ENCODE measurements at regions of chr9 and their contacts with region 1.

Region 1: GRCh38 chr9:92790542-92791527 is 26.2 kb upstream of the BICD2 start:
- DNase-seq: peak; percentile 77
- ATAC-seq: peak; percentile 97
- H3K4me3 ChIP-seq: no peak overlapping the region
- H3K27ac ChIP-seq: no peak overlapping the region
- H3K4me1 ChIP-seq: no peaks in the 10 kb centered on the region
- H3K27me3 ChIP-seq: no peaks in the 10 kb centered on the region
- CTCF ChIP-seq: peak; percentile 88

Region 2: GRCh38 chr9:92133949-92134604 is 656.8 kb before region 1 on chr9:
- intact Hi-C with region 1: loop called (anchors 10 kb)
- DNase-seq: peak; percentile 90
- ATAC-seq: peak; percentile 91
- H3K4me3 ChIP-seq: no peak overlapping the region
- H3K27ac ChIP-seq: no peak overlapping the region
- H3K4me1 ChIP-seq: no peaks in the 10 kb centered on the region
- H3K27me3 ChIP-seq: peaks cover 4% of the 10 kb centered on the region
- CTCF ChIP-seq: peak; percentile 92

Region 3: GRCh38 chr9:92850884-92851283 is 60.0 kb after region 1 on chr9:
- intact Hi-C with region 1: no loop called
- DNase-seq: no peak
- ATAC-seq: no peak
- H3K4me3 ChIP-seq: no peak overlapping the region
- H3K27ac ChIP-seq: no peak overlapping the region
- H3K4me1 ChIP-seq: no peaks in the 10 kb centered on the region
- H3K27me3 ChIP-seq: no peaks in the 10 kb centered on the region
- CTCF ChIP-seq: no peak

Region 4: GRCh38 chr9:93095205-93096130 is 304.6 kb after region 1 on chr9:
- intact Hi-C with region 1: no loop called
- DNase-seq: peak; percentile 100
- ATAC-seq: peak; percentile 88
- H3K4me3 ChIP-seq: peak overlapping the region; percentile 91
- H3K27ac ChIP-seq: peak overlapping the region; percentile 95
- H3K4me1 ChIP-seq: peaks cover 59% of the 10 kb centered on the region
- H3K27me3 ChIP-seq: no peaks in the 10 kb centered on the region
- CTCF ChIP-seq: no peak